ENCODE measurements at regions of chr13 and their contacts with region 1.

Region 1: DNA sequence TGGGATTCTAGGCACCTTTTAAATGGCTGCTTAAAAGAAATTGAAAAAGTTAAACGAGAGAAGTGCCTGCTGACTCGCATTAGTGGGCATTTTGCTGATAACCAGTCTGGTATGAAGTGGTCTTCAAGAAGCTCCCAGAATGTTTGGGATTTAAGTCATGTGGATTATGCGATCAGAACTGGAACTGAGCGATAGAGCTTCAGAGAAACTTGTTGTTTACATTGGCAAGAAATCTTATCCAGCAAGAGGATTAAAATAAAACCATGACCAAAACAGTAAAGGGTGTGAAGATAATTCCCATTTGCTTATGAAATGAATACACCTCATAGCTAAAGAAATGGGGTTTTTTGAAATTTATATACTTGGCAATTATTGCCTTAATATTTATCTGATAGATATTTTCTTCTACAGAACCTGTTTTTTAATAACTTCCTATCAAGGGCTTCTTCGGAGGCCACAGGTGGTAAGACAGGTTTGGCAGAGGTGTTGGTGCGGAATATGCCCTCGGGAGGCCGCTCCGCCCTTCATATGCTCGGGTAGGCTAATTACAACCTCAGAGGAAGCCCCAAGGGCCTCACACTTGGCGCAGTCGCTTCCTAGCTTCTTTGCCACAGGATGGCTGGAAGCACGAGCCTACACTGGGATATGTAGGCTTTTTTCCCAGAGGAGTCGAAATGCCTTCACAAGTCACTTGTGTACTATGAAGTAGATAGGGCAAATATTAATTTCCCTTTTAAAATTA is 68.6 kb downstream of the LMO7 start:
- DNase-seq: no peak

Region 2: GRCh38 chr13:73880365-73880764 is 1824.4 kb before region 1 on chr13:
- intact Hi-C with region 1: loop called in 1 of 2 experiments (anchors 5 kb)
- DNase-seq: no peak

Region 3: DNA sequence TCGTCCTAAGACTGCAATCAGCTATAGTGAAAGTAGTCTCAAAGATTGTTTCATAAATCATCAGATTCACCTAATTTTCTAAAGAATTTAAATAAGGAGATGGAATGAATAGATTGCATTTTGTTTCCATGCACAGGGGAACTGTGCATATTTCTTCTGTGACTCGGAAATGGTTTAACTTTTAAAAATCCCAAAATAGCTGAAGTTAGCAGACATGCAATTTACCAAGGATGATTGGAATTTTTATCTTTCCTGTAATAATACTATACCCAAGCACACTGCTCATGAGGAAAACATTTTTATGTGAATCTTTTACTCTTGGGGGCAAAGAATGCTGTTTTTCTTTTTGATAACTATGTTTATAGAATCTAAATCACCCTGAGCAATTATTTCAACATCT is 83.6 kb before region 1 on chr13:
- intact Hi-C with region 1: no loop called
- DNase-seq: no peak